Activated B cell treated with CpG ODN at 0.5 μM for 24 hours (primary cell): ENCODE measurements at regions of chr1 and their contacts with region 1.

Region 1: DNA sequence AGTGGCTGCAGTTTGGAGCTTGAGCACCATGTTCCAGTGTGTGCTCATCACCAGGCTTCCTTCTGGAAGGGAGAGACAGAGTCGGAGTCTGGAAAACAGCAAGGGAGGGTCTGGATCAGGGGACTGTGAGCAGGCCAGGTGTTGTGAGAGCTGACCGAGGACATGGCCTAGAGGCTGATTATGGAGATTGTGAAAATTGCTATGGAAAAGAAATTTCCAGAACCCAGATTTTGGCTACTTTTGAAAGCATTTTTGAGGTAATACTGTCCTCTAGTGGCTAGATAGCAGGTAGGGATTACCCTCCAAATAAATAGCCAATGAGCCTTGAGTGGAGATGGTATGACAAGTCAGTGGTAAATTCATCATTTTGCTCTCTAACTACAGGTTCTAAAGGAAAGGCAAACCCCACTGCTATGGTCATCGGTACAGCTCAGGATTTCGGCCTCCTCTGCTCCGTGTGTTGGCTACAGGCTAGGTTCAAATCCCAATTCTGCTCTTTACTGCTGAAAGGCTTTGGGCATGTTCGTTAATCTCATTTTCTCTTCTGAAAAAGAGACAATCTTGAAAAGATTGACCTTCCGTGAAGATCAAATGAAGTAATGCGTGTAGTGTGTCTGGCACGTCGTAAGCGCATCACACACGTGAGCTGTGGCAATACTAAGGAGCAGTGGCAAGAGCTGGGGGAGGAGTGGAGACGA is 1.0 kb upstream of the HAO2 start:
- DNase-seq: no peak
- ATAC-seq: no peak
- H3K4me3 Mint-ChIP-seq: no peak overlapping the region
- H3K27ac Mint-ChIP-seq: no peak overlapping the region
- H3K4me1 Mint-ChIP-seq: no peaks in the 10 kb centered on the region
- H3K27me3 Mint-ChIP-seq: peaks cover 7% of the 10 kb centered on the region
- CTCF ChIP-seq: no peak

Region 2: DNA sequence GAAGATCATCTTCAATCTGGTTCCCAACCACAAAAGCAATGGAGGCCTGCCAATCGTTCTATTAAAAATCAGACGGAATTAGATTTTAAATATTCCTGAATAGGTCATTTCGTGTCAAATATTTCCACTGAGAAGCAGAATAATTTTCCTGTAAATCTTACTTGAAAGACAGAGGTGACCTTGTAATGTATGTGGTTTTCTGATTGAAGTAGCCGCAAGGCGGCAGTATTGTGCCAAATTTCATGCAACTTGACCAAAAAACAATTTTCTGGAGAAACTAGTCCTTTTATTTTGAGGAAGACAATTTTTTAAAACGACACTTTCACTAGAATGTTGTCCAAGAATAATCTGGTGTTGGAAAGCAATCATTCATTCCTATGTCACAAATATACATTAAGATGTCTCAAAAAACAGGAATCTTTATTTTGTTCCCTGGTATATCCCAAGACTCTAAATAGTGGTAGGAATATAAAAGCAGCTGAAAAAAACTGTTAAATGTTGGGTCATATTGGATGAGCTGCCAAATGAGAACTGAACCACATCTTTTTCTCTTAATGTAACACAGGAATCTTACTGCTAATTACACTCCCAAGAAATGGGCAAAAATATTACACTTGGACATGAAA is 1216.2 kb before region 1 on chr1:
- CTCF ChIA-PET with region 1: no interaction called
- POLR2A ChIA-PET with region 1: no interaction called
- intact Hi-C with region 1: loop called (anchors 1 kb)
- DNase-seq: no peak
- ATAC-seq: no peak
- H3K4me3 Mint-ChIP-seq: no peak overlapping the region
- H3K27ac Mint-ChIP-seq: no peak overlapping the region
- H3K4me1 Mint-ChIP-seq: no peaks in the 10 kb centered on the region
- H3K27me3 Mint-ChIP-seq: no peaks in the 10 kb centered on the region
- CTCF ChIP-seq: no peak

Region 3: GRCh38 chr1:119275145-119276134 is 92.1 kb before region 1 on chr1:
- CTCF ChIA-PET with region 1: interaction called, 5 read pairs
- POLR2A ChIA-PET with region 1: no interaction called
- intact Hi-C with region 1: loop called (anchors 1 kb)
- DNase-seq: no peak
- ATAC-seq: no peak
- H3K4me3 Mint-ChIP-seq: no peak overlapping the region
- H3K27ac Mint-ChIP-seq: no peak overlapping the region
- H3K4me1 Mint-ChIP-seq: no peaks in the 10 kb centered on the region
- H3K27me3 Mint-ChIP-seq: peaks cover 3% of the 10 kb centered on the region
- CTCF ChIP-seq: no peak

Region 4: GRCh38 chr1:119286587-119287181 is 80.9 kb before region 1 on chr1:
- CTCF ChIA-PET with region 1: interaction called, 3 read pairs
- POLR2A ChIA-PET with region 1: no interaction called
- intact Hi-C with region 1: loop called (anchors 1 kb)
- DNase-seq: no peak
- ATAC-seq: no peak
- H3K4me3 Mint-ChIP-seq: no peak overlapping the region
- H3K27ac Mint-ChIP-seq: no peak overlapping the region
- H3K4me1 Mint-ChIP-seq: no peaks in the 10 kb centered on the region
- H3K27me3 Mint-ChIP-seq: peaks cover 6% of the 10 kb centered on the region
- CTCF ChIP-seq: no peak